Activated CD4-positive, alpha-beta memory T cell treated with anti-CD3 and anti-CD28 coated beads for 36 hours (primary cell): ENCODE measurements at regions of chrX and their contacts with region 1.

Region 1: DNA sequence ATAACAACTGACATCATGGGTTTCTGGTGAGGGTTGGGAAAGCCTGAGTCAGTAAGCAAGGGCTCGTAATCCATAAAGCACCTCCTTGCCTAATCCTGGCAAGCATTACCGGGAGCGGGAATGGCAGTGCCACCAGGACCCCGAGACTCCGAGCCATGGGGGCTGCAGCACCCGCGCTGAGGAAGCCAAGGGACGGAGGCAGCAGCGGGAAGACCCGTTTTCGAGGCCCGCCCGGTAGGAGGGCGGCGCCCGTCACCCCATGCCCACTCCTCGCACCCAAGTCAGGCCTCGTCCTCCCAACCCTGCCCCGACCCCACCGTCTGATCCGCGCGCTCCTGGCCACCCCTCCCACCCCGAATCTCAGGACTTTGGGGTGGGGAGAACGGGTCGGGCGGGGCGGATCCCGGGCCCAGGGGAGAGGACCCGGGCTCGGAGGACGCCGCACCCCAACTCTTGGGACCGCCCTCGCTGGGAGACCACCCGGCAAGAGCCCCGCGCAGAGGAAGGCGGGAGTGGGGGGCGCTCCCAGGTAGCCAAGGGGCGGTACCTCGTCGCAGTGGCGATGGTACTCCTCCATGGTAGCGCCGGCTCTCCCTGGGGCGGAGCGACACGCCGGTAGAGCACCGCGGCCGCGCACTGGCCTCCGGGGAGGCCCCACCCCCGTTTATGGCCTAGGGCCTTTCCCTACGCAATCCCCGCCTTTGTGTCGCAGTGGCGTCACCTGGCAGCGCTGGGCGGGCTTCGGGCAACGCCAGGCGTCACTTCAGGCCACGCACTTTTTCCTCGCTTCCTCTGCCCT is at the start of gene DYNLT3:
- DNase-seq: peak; percentile 87
- H3K4me3 Mint-ChIP-seq: peak within 1 kb of the TSS; percentile 70
- H3K27ac Mint-ChIP-seq: peak within 1 kb of the TSS; percentile 87
- H3K4me1 Mint-ChIP-seq: peaks cover 22% of the 10 kb centered on the region
- H3K27me3 Mint-ChIP-seq: no peaks in the 10 kb centered on the region
- total RNA-seq, gene DYNLT3: 27.2 to 27.7 TPM

Region 2: DNA sequence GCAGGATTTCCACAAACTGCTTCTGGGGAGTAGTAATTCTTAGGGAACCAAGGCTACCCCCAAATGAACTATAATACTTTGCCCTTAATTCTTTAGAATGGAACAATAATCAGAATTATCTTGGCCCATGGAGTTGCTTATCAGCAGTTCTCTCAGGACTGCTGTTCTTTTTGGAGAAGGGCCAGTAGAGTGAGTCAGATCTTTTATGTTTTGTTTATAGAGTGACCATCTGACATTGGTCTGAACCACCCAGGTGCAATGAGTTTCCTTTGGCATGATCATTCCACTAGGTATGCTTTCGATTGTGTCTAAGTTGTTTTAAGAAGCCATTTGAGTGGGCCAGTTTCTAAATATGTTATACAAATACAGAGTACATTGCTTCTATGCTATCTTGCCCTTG is 466.2 kb before region 1 on chrX:
- CTCF ChIA-PET with region 1: no interaction called
- POLR2A ChIA-PET with region 1: no interaction called
- intact Hi-C with region 1: no loop called
- DNase-seq: no peak
- H3K4me3 Mint-ChIP-seq: no peak overlapping the region
- H3K27ac Mint-ChIP-seq: no peak overlapping the region
- H3K4me1 Mint-ChIP-seq: no peaks in the 10 kb centered on the region
- H3K27me3 Mint-ChIP-seq: no peaks in the 10 kb centered on the region

Region 3: DNA sequence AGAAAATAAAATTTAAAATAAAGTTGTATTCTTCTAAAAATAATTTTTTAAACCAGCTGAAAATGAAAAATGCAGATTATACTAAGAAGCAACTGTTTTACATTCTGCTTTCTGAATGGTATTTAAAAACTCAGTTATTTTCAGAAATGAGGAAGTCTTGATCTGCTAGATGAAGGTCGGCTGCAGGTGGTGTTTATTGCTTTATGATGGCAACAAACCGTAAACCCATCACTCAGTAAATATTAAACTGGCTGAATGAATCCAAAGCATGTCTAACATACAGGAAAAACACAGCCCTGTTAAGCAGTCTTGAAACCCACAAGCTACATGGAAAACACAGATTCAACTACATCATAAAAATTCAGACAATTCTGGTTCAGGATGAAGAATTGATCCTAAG is 29.1 kb before region 1 on chrX:
- CTCF ChIA-PET with region 1: no interaction called
- POLR2A ChIA-PET with region 1: no interaction called
- intact Hi-C with region 1: no loop called
- DNase-seq: no peak
- H3K4me3 Mint-ChIP-seq: no peak overlapping the region
- H3K27ac Mint-ChIP-seq: no peak overlapping the region
- H3K4me1 Mint-ChIP-seq: no peaks in the 10 kb centered on the region
- H3K27me3 Mint-ChIP-seq: no peaks in the 10 kb centered on the region

Region 4: DNA sequence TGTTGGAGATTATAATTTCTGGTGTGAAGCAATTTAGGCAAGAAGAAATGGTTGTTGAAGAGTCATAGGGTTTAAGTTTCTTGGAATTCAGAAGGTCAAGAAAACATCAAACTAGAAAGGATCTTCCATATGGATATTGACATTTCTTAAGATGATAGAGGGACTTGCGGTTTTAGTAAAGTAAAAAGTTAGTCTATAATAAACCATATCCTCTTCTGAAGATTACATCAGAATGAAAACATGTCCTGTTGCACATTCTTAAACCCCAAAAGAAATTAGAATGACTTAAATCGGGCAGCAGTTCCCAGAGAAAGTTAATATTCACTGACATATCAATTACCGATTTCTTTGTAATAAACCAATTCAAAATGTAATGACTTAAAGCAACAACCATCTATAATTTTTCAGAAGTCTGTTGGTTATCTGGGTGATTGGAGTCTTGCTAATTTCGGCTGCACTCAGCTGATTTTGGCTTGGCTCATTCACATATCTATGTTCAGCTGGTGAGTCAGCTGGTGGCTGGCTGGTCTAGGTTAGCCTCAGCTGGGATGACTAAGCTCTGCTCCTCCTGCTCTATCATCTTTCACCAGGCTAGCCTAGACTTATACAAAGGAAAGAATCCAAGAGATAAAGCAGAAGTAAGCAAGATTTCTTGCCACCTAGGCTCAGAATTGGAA is 24.6 kb after region 1 on chrX:
- CTCF ChIA-PET with region 1: no interaction called
- POLR2A ChIA-PET with region 1: no interaction called
- intact Hi-C with region 1: loop called (anchors 1 kb)
- DNase-seq: peak; percentile 38
- H3K4me3 Mint-ChIP-seq: no peak overlapping the region
- H3K27ac Mint-ChIP-seq: no peak overlapping the region
- H3K4me1 Mint-ChIP-seq: peaks cover 7% of the 10 kb centered on the region
- H3K27me3 Mint-ChIP-seq: peaks cover 2% of the 10 kb centered on the region

Region 5: DNA sequence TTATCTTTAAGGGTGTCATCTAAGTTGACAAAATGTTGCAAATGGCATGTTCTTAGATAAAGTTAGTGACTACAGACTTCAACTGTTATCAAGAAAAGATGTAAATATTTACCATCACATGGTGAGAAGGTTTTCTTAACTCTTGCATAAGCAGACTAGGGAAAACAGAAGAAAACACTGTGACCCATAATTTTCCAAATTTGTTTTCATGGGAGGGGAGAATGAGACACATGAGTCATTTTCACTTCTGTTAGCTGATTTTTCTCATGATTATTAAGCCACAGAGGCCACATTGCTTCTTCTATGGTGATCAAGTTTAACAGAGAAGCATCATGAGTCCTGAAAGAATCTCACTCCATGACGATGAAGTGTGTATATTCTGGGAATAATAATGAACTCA is 129.0 kb after region 1 on chrX:
- CTCF ChIA-PET with region 1: no interaction called
- POLR2A ChIA-PET with region 1: no interaction called
- intact Hi-C with region 1: loop called (anchors 10 kb)
- DNase-seq: no peak
- H3K4me3 Mint-ChIP-seq: no peak overlapping the region
- H3K27ac Mint-ChIP-seq: no peak overlapping the region
- H3K4me1 Mint-ChIP-seq: peaks cover 12% of the 10 kb centered on the region
- H3K27me3 Mint-ChIP-seq: peaks cover 9% of the 10 kb centered on the region